ENCODE measurements at regions of chr4 and their contacts with region 1.

Region 1: DNA sequence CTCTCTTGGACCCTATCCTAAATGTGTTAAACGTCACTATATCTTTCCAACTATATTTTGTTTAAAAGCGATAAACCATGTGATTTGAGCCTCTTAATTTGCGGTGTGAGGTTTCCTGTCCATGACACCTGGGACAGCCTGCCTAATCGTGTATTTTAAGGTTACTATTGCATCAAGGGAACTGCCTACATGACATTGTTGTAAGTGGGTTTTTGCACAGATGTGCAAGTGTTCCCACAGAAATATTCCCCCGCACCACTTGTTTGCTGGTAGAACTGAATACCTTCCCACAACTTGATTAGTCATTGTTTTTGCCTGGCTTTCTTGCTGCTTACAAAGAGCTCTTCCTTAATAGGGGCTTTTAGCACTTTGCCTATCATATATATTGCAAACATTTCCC is 5.1 kb upstream of the FAM184B start:
- DNase-seq: no peak
- H3K4me3 Mint-ChIP-seq: no peak overlapping the region
- H3K27ac Mint-ChIP-seq: no peak overlapping the region
- H3K4me1 Mint-ChIP-seq: peaks cover 21% of the 10 kb centered on the region
- H3K27me3 Mint-ChIP-seq: peaks cover 12% of the 10 kb centered on the region

Region 2: GRCh38 chr4:17797808-17798207 is 11.2 kb after region 1 on chr4:
- CTCF ChIA-PET with region 1: interaction called, 5 read pairs
- intact Hi-C with region 1: loop called (anchors 1 kb)
- DNase-seq: no peak
- H3K4me3 Mint-ChIP-seq: no peak overlapping the region
- H3K27ac Mint-ChIP-seq: no peak overlapping the region
- H3K4me1 Mint-ChIP-seq: peaks cover 12% of the 10 kb centered on the region
- H3K27me3 Mint-ChIP-seq: no peaks in the 10 kb centered on the region

Region 3: DNA sequence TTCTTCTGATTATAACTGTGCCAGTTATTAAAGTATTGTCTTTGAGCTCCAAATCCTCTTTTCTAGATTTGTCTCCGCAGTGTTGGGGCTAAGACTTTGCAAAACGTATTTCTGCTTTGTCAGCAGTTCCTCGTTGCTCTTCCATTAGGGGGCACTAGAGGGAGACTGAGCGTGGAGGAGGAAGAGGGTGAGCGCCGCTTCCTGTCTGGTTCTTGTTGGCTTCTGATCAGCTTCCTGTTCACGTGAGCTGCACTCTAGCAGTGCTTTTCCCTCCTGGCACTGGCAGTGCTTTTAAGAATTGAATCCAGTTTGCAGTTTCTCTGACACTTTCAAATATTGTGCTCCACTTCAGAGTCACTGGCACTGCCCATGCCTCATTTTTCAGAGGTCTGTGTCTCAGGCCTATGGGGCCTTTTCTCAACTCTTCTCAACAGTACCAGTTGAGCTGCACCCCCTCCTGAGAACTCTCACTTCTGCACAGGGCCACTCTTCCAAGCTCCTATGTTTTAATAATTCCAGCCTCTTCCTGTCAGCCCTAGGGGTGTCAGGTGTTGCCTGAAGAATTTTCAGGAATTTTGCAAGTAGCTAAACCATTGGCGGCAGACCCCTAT is 289.4 kb after region 1 on chr4:
- CTCF ChIA-PET with region 1: no interaction called
- intact Hi-C with region 1: no loop called
- DNase-seq: peak; percentile 54
- H3K4me3 Mint-ChIP-seq: no peak overlapping the region
- H3K27ac Mint-ChIP-seq: no peak overlapping the region
- H3K4me1 Mint-ChIP-seq: peaks cover 7% of the 10 kb centered on the region
- H3K27me3 Mint-ChIP-seq: peaks cover 21% of the 10 kb centered on the region